CD14-positive monocyte (primary cell): ENCODE measurements at regions of chr9 and their contacts with region 1.

Region 1: GRCh38 chr9:35152936-35153335 is 8.9 kb upstream of the UNC13B start:
- DNase-seq: no peak
- H3K4me3 ChIP-seq: no peak overlapping the region
- H3K4me3 Mint-ChIP-seq: no peak overlapping the region
- H3K27ac ChIP-seq: no peak overlapping the region
- H3K27ac Mint-ChIP-seq: no peak overlapping the region
- H3K4me1 ChIP-seq: no peaks in the 10 kb centered on the region
- H3K4me1 Mint-ChIP-seq: no peaks in the 10 kb centered on the region
- H3K27me3 ChIP-seq: no peaks in the 10 kb centered on the region
- H3K27me3 Mint-ChIP-seq: peaks cover 0 to 3% (median 0%) of the 10 kb centered on the region in 3 donors
- CTCF ChIP-seq: no peak

Region 2: GRCh38 chr9:35195683-35196082 is 42.7 kb after region 1 on chr9:
- intact Hi-C with region 1: loop called in 1 of 2 experiments (anchors 5 kb)
- DNase-seq: no peak
- H3K4me3 ChIP-seq: no peak overlapping the region
- H3K4me3 Mint-ChIP-seq: no peak overlapping the region
- H3K27ac ChIP-seq: no peak overlapping the region
- H3K27ac Mint-ChIP-seq: no peak overlapping the region
- H3K4me1 ChIP-seq: no peaks in the 10 kb centered on the region
- H3K4me1 Mint-ChIP-seq: no peaks in the 10 kb centered on the region
- H3K27me3 ChIP-seq: no peaks in the 10 kb centered on the region
- H3K27me3 Mint-ChIP-seq: peaks cover 0 to 2% (median 2%) of the 10 kb centered on the region in 3 donors
- CTCF ChIP-seq: no peak